ENCODE measurements at regions of chr3 and their contacts with region 1.

Region 1: DNA sequence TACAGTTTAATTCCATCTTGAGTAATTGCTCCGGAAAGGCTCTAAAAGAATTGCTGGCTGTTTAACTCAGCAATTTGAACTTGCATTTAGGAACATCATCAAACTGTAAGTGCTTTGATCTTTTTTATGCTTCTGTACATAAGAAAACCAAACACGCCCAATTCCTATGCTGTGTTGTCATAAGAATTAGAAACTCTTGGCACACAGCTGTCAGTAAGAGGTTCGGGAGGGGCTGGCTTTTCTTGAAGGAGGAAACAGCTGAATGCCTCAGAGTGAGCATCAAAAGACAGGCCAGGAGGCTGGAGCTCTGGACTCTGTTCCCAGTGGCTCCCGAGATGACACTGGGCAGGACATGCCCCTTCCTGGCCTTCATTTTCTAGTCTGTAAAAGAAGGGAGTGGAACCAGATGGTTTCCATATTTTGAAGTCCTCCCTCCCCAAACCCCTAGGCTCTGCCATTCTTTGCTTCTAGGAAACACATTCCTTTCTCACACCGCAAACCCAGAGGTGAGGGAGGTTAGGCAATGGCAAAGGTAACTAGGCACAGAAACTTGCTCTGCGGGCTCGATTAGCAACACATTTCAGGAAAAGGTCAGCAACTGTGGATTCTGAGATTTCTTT is 73.7 kb upstream of the DLG1 start:
- DNase-seq: no peak
- ATAC-seq: peak in 3 of 8 donors; percentile 23 to 42 (median 28)
- H3K4me3 ChIP-seq: no peak overlapping the region
- H3K27ac ChIP-seq: no peak overlapping the region
- H3K4me1 ChIP-seq: peaks cover 0 to 5% (median 0%) of the 10 kb centered on the region in 9 donors
- H3K27me3 ChIP-seq: no peaks in the 10 kb centered on the region
- CTCF ChIP-seq: no peak

Region 2: DNA sequence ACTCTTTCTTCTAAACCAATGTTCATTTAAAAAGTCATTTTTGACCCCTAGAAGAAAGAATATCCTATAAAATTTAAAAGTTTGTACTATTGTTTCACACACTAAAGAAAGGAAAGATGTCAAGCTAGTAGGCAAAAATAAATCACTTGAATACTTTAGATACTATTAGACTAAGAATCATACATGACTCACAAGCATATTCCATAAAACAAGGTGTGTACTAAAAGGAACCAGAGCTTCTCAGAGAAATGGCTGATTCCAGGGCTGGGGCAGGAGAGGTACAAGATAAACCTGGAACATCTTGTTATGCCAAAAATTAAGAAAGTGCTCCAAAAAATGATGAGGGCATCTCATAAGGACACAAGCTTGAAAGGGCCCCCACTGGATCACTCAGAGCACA is 82.4 kb before region 1 on chr3:
- intact Hi-C with region 1: loop called in 1 of 10 experiments (anchors 5 kb)
- DNase-seq: no peak
- ATAC-seq: no peak
- H3K4me3 ChIP-seq: no peak overlapping the region
- H3K27ac ChIP-seq: peak overlapping the region in 1 of 10 donors; percentile 12
- H3K4me1 ChIP-seq: peaks cover 0 to 31% (median 25%) of the 10 kb centered on the region in 9 donors
- H3K27me3 ChIP-seq: no peaks in the 10 kb centered on the region
- CTCF ChIP-seq: no peak

Measured in heart right ventricle (tissue), 16 donors.